Calu3 (cell line): ENCODE measurements at regions of chr14 and their contacts with region 1.

Region 1: DNA sequence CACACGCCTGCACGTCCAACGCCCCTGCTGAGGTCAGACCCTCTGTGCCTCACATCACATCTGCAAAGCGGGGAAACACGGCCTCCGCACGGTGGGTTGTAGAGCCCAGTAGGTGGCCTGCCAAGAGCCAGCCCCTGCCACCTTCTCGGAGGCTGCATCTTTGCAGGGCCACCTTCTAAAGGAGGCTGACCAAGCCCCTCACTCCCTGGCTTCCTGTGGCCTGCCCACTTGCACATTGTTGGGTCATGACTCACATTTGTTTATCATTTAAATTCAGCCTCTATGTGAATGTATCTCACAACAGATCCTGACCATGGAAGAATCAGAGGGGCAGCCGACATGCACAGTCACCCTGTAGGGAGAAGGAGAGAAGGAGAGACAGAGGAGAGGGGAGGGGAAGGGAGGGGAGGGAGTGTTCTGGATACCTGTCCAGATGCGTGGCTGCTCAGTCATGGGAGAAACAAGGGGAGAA is 319.5 kb upstream of the DIO3 start:
- DNase-seq: no peak
- H3K4me3 Mint-ChIP-seq: no peak overlapping the region
- H3K27ac Mint-ChIP-seq: no peak overlapping the region
- H3K4me1 Mint-ChIP-seq: no peaks in the 10 kb centered on the region
- H3K27me3 Mint-ChIP-seq: no peaks in the 10 kb centered on the region
- CTCF ChIP-seq: no peak

Region 2: DNA sequence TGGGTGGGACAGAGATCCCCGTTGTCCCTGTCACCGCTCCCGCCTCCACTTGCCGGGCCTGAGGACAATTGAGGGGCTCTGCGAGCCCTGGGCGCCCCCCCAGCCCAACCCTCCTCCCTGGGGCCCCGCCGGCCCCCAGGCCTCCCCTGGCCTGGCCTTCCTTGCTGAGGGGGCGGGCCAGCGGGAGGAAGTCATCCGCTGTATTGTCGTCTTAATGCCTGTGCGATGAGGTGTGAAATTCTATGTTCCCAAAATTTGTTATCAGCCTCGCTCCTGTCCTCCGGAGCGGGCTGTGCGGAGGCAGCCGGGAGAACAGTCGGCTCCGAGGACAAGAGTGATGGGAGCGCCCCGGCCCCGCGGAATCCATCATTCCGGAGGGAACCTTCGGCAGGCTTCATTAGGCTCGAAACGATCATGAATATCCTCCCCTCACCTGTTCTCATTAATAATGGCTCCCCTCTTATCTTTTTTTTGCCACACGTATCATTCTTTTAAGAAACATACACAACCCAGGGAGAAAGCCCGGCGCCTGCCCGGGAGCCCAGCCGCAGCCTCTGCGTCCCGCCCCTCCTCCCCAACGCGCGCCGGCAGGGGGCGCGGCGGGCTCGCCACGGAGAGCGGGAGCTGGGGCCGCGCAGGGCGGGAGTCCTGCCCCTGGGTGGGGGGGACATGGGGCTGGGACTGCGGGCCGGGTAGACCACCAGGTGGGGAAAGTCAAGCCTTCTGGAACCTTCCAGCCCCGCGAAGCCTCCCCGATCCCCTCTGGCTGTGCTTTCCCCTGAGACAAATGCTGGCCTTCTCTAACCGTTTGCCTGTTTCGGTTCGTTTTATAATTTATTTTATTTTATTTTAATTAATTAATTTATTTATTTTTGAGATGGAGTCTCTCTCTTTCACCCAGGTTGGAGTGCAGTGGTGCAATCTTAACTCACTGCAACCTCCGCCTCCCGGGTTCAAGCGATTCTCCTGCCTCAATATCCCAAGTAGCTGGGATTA is 532.3 kb before region 1 on chr14:
- CTCF ChIA-PET with region 1: no interaction called
- intact Hi-C with region 1: loop called (anchors 5 kb)
- DNase-seq: peak; percentile 30
- H3K4me3 Mint-ChIP-seq: no peak overlapping the region
- H3K27ac Mint-ChIP-seq: no peak overlapping the region
- H3K4me1 Mint-ChIP-seq: no peaks in the 10 kb centered on the region
- H3K27me3 Mint-ChIP-seq: peaks cover 15% of the 10 kb centered on the region
- CTCF ChIP-seq: peak; percentile 30

Region 3: DNA sequence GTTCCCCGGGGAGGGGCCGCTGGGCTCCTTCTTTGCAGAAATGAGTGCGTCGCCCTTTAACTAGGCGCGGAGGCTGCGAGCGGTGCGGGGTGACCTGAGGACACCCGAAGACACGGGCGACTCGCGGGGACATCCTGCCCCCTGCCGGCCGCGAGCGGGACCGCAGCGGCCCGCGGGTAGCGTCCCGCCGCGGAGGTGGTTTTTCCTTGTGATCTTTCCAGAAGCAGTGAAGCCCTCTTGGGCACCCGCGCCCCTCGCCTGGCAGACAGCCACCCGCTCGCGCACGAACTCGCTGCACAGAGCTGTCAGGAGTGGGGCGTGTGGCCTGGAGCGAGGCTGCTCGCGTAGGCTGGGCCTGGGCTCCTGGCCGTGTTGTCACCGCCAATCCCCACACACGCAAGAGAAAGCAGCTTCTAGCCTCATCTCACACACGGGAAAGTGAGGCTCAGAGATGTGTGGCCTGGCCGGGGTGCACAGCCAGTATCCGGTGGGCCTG is 386.7 kb after region 1 on chr14:
- CTCF ChIA-PET with region 1: no interaction called
- intact Hi-C with region 1: loop called (anchors 10 kb)
- DNase-seq: peak; percentile 83
- H3K4me3 Mint-ChIP-seq: no peak overlapping the region
- H3K27ac Mint-ChIP-seq: no peak overlapping the region
- H3K4me1 Mint-ChIP-seq: no peaks in the 10 kb centered on the region
- H3K27me3 Mint-ChIP-seq: peaks cover 4% of the 10 kb centered on the region
- CTCF ChIP-seq: peak; percentile 93